Activated naive CD4-positive, alpha-beta T cell treated with anti-CD3 and anti-CD28 coated beads for 36 hours (primary cell): ENCODE measurements at regions of chr22 and their contacts with region 1.

Region 1: DNA sequence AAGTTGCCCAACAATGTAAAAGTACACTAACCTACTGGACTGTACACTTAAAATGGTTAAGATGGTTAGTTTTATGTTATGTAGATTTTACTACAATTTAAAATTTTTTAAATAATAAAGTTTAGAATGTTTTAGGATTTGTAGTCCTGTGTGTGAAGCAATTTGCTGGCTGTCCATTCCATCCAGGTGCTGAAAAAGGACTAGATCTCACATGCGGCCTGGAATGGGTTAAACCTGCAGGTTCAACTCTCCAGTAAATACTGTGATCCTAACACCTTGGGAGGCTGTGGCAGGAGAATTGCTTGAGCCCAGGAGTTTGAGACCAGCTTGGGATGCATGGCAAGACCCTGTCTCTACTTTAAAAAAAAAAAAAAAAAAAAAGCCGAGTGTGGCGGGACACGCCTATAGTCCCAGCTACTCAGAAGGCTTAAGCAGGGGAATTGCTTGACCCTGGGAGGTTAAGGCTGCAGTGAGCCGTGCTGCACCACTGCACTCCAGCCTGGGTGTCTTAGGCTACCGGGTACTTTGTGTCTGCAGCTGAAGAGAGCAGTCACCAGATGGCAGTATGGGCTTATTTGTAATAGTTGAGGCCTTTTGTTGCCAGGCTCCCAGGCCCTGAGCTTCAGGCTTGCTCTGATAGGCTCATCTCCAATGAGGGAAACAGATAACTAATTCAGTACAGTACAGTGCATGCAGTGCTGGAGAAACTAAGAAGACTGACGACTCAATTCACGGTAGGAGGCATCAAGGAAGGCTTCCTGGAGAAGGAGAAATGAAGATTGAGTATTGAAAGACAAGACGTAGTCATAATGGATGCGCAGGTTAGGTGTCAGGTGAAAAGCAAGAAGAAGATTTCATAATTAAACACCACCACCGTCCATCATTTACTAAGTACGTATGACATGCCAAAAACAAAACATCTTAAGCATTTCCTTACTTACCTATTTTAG is 64.7 kb upstream of the ASPHD2 start:
- DNase-seq: peak; percentile 64
- H3K4me3 Mint-ChIP-seq: no peak overlapping the region
- H3K27ac Mint-ChIP-seq: no peak overlapping the region
- H3K4me1 Mint-ChIP-seq: peaks cover 7% of the 10 kb centered on the region
- H3K27me3 Mint-ChIP-seq: peaks cover 12% of the 10 kb centered on the region

Region 2: DNA sequence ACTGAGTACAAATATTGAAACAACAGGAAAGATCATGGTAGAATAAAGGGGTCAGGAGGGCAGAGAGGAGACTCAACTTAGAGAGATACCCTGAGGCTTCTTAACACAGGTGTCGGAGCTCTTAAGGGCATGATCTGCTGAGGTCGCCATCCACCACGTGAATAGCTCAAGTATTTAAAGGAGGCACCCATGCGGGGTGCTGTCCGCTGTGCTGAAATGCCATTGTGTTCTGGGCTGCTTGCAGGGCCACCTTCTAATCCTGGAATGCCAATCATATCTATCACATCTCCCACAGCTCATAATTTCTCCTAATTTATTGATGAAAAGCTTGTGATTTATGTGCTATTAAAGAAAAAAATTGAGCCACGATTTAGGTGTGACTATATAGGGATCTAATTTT is 104.8 kb before region 1 on chr22:
- CTCF ChIA-PET with region 1: interaction called, 4 read pairs
- intact Hi-C with region 1: loop called (anchors 1 kb)
- DNase-seq: peak; percentile 61
- H3K4me3 Mint-ChIP-seq: no peak overlapping the region
- H3K27ac Mint-ChIP-seq: no peak overlapping the region
- H3K4me1 Mint-ChIP-seq: no peaks in the 10 kb centered on the region
- H3K27me3 Mint-ChIP-seq: peaks cover 21% of the 10 kb centered on the region

Region 3: GRCh38 chr22:26286091-26286820 is 78.1 kb before region 1 on chr22:
- CTCF ChIA-PET with region 1: no interaction called
- intact Hi-C with region 1: no loop called
- DNase-seq: no peak
- H3K4me3 Mint-ChIP-seq: no peak overlapping the region
- H3K27ac Mint-ChIP-seq: no peak overlapping the region
- H3K4me1 Mint-ChIP-seq: no peaks in the 10 kb centered on the region
- H3K27me3 Mint-ChIP-seq: peaks cover 10% of the 10 kb centered on the region

Region 4: GRCh38 chr22:26483439-26484359 is 119.4 kb after region 1 on chr22 and contains the starts of genes HPS4 and SRRD:
- CTCF ChIA-PET with region 1: interaction called, 11 read pairs
- intact Hi-C with region 1: no loop called
- DNase-seq: peak; percentile 90
- H3K4me3 Mint-ChIP-seq: peak within 1 kb of the TSS; percentile 82
- H3K27ac Mint-ChIP-seq: peak within 1 kb of the TSS; percentile 84
- H3K4me1 Mint-ChIP-seq: peaks cover 59% of the 10 kb centered on the region
- H3K27me3 Mint-ChIP-seq: no peaks in the 10 kb centered on the region
- total RNA-seq, gene HPS4: 48.0 to 51.5 TPM
- total RNA-seq, gene SRRD: 20.8 to 21.6 TPM

Region 5: GRCh38 chr22:26542831-26543230 is 178.5 kb after region 1 on chr22:
- CTCF ChIA-PET with region 1: no interaction called
- intact Hi-C with region 1: no loop called
- DNase-seq: no peak
- H3K4me3 Mint-ChIP-seq: no peak overlapping the region
- H3K27ac Mint-ChIP-seq: no peak overlapping the region
- H3K4me1 Mint-ChIP-seq: peaks cover 14% of the 10 kb centered on the region
- H3K27me3 Mint-ChIP-seq: no peaks in the 10 kb centered on the region

Region 6: DNA sequence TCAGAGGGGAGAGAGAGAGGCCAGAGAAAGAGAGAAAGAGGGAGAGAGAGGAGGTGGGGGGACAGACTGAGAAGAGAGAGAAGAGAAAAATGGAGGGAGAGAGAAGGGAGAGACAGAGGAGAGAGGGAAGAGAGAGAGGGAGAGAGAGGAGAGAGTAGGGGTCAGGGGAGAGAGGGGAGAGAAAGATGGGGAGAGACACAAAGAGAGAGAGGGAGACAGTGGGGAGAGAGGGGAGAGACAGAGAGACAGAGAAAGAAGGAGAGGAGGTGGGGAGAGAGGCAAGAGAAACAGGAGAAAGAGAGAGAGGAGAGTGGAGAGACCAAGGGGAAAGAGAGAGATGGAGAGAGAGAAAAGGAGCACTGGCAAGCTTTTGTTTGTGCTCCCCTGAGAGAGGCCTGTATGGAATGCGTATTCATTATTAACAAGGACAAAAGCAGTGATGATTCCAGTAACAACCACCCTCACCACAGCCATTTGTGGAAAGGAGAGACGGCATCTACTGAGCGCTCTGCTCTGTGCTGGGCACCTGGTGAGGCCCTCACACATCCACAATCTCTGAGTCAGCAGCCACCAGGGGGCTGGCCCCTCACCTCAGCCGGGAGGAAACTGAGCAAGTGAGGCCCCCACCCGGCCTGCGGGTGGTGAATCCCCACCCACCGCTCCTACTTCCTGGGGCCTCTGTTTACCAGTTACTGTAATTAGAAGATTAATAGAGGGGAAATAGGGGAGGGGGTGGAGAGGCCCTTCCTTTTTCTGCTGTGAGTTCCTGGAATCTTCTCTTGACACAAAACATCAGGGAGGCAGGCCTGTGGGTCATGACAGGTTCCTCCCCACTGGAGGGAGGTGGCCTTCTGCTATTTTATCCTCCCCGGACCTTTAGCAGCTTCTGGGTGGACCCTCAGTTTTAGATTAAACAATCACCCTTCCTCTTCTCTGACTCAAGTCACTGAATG is 278.4 kb after region 1 on chr22:
- CTCF ChIA-PET with region 1: interaction called, 3 read pairs
- intact Hi-C with region 1: loop called (anchors 2 kb)
- DNase-seq: peak; percentile 96
- H3K4me3 Mint-ChIP-seq: peak overlapping the region; percentile 60
- H3K27ac Mint-ChIP-seq: peak overlapping the region; percentile 95
- H3K4me1 Mint-ChIP-seq: peaks cover 52% of the 10 kb centered on the region
- H3K27me3 Mint-ChIP-seq: peaks cover 8% of the 10 kb centered on the region

Region 7: DNA sequence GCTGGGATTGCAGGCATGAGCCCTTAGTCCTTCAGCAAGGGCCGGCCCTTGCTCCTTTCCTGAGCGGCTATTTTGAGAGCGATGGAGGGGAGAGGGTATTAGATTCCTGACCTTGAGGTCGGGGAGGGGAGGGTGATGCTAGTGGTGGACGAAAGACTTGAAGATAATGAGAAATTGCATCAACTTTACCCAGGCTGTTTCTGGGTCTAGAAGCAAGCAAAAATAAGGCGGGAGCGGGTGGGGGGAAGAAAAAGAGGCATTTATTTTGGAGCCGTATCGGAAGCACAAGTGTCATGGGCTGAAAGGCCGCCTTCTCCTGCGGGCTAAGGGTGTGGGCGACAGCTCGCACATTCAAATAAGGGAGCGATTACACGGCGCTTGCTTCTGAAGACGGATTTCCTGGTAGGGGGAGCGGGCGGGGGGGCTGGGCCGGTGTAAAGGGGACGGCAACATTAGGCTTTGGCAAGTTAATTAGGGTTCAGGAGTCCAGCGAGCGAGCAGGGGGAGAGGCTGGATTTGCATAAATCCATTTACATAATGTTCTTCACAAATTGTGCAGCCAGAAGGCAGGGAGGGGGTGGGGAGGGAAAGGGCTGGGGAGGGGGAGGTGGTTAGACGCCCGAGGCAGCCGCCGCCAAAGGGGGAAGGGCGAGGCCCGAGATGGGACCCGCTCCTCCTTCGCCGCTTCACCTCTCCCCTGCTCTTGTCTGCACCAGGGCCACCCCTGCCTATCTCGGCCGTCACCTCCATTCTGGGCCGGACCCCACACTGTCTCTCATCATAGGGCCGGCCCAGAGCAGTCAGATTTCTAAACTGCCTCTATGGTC is 538.9 kb after region 1 on chr22:
- CTCF ChIA-PET with region 1: no interaction called
- intact Hi-C with region 1: no loop called
- DNase-seq: peak; percentile 30
- H3K4me3 Mint-ChIP-seq: peak overlapping the region; percentile 52
- H3K27ac Mint-ChIP-seq: no peak overlapping the region
- H3K4me1 Mint-ChIP-seq: peaks cover 14% of the 10 kb centered on the region
- H3K27me3 Mint-ChIP-seq: peaks cover 37% of the 10 kb centered on the region